CD14-positive monocyte (primary cell): ENCODE measurements at regions of chr16 and their contacts with region 1.

Region 1: DNA sequence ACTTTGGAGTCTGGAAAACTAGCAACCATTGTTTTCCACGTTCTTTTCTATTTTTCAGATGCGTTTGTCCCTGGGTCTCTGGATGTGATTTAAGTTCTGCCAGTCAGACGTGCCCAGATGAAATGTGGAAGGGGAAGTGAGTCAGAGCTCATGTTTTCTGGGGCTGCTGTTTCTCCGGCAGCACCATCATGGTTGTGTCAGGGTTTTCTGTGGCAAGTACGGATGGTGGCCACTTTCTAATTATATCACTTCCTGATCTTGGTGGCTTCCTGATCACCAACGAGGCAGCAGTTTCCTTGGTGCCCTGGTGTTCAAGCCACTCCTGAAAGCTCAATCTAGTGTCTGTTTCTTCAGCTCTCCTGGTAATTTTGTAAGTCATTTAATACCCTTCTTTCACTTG is 31.4 kb upstream of the PMFBP1 start:
- DNase-seq: peak; percentile 96 to 98 (median 97)
- H3K4me3 ChIP-seq: peak overlapping the region in 2 of 3 experiments; percentile 13 to 52
- H3K4me3 Mint-ChIP-seq: peak overlapping the region; percentile 47 to 83
- H3K27ac ChIP-seq: peak overlapping the region; percentile 97 to 100
- H3K27ac Mint-ChIP-seq: peak overlapping the region; percentile 99 to 100 (median 100)
- H3K4me1 ChIP-seq: peaks cover 37 to 44% of the 10 kb centered on the region in 2 donors
- H3K4me1 Mint-ChIP-seq: peaks cover 50% of the 10 kb centered on the region
- H3K27me3 ChIP-seq: no peaks in the 10 kb centered on the region
- H3K27me3 Mint-ChIP-seq: no peaks in the 10 kb centered on the region
- CTCF ChIP-seq: no peak

Region 2: GRCh38 chr16:72172105-72173034 is 31.0 kb before region 1 on chr16 and contains the start of gene PMFBP1:
- intact Hi-C with region 1: loop called in 1 of 2 experiments (anchors 1 kb)
- DNase-seq: peak; percentile 98 to 100 (median 100)
- H3K4me3 ChIP-seq: no peak within 1 kb of the TSS
- H3K4me3 Mint-ChIP-seq: peak within 1 kb of the TSS in 1 of 2 donors; percentile 71
- H3K27ac ChIP-seq: peak within 1 kb of the TSS; percentile 69 to 97
- H3K27ac Mint-ChIP-seq: peak within 1 kb of the TSS; percentile 93 to 99 (median 97)
- H3K4me1 ChIP-seq: peaks cover 25 to 26% of the 10 kb centered on the region in 2 donors
- H3K4me1 Mint-ChIP-seq: peaks cover 21% of the 10 kb centered on the region
- H3K27me3 ChIP-seq: no peaks in the 10 kb centered on the region
- H3K27me3 Mint-ChIP-seq: peaks cover 0 to 4% (median 0%) of the 10 kb centered on the region in 3 donors
- CTCF ChIP-seq: no peak
- polyA plus RNA-seq, gene PMFBP1: 0.15 to 0.87 (median 0.18) TPM

Region 3: DNA sequence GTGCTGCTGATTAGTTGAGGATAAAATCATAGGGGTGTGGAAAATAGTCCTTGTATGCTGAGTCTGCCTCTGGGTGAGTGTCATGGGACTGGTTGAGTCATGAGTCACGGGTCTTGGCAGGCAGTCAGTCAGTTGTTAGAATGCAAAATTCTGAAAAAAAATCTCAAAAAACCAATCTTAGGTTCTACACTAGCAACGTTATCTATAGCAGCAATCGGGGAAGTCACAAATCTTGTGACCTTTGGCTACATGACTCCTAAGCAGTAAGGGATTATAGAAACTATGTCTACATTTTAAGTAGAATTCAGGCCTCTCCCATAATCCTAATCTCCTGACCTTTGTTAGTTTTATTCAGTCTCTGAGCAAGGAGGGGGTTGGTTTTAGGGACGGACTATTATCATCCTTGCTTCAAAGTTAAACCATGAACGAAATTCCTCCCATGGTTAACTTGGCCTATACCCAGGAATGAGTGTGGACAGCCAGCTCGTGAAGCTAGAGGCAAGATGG is 13.5 kb before region 1 on chr16:
- intact Hi-C with region 1: no loop called
- DNase-seq: peak; percentile 65 to 87 (median 79)
- H3K4me3 ChIP-seq: no peak overlapping the region
- H3K4me3 Mint-ChIP-seq: no peak overlapping the region
- H3K27ac ChIP-seq: peak overlapping the region in 1 of 2 donors; percentile 16
- H3K27ac Mint-ChIP-seq: peak overlapping the region; percentile 51 to 84 (median 78)
- H3K4me1 ChIP-seq: no peaks in the 10 kb centered on the region
- H3K4me1 Mint-ChIP-seq: peaks cover 16% of the 10 kb centered on the region
- H3K27me3 ChIP-seq: no peaks in the 10 kb centered on the region
- H3K27me3 Mint-ChIP-seq: peaks cover 0 to 1% (median 1%) of the 10 kb centered on the region in 3 donors
- CTCF ChIP-seq: no peak

Region 4: GRCh38 chr16:72241930-72242329 is 38.5 kb after region 1 on chr16:
- intact Hi-C with region 1: no loop called
- DNase-seq: peak; percentile 3 to 13 (median 9)
- H3K4me3 ChIP-seq: no peak overlapping the region
- H3K4me3 Mint-ChIP-seq: no peak overlapping the region
- H3K27ac ChIP-seq: no peak overlapping the region
- H3K27ac Mint-ChIP-seq: no peak overlapping the region
- H3K4me1 ChIP-seq: no peaks in the 10 kb centered on the region
- H3K4me1 Mint-ChIP-seq: no peaks in the 10 kb centered on the region
- H3K27me3 ChIP-seq: no peaks in the 10 kb centered on the region
- H3K27me3 Mint-ChIP-seq: no peaks in the 10 kb centered on the region
- CTCF ChIP-seq: peak; percentile 61

Region 5: DNA sequence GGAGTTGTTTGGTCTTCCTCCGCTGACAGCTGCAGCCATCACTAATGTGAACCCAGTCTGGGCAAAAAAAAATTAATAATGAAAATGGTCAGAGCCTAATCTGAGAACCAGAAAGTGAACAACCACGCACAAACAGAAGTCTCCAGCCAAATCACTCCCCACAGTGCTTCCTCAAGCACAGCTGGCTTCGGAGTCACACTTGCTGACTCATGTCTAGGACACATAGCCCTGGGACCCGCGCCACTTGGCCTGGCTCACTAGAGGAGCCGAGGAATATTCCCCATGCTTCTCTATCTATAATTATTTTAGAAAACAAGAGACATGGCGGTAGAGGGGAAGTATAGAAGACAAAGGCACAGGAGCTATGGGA is 735.4 kb after region 1 on chr16:
- intact Hi-C with region 1: loop called in 1 of 2 experiments (anchors 10 kb)
- DNase-seq: peak; percentile 67 to 83 (median 82)
- H3K4me3 ChIP-seq: no peak overlapping the region
- H3K4me3 Mint-ChIP-seq: peak overlapping the region in 1 of 2 donors; percentile 62
- H3K27ac ChIP-seq: peak overlapping the region; percentile 39 to 51
- H3K27ac Mint-ChIP-seq: peak overlapping the region; percentile 63 to 95 (median 80)
- H3K4me1 ChIP-seq: peaks cover 24 to 28% of the 10 kb centered on the region in 2 donors
- H3K4me1 Mint-ChIP-seq: peaks cover 33% of the 10 kb centered on the region
- H3K27me3 ChIP-seq: no peaks in the 10 kb centered on the region
- H3K27me3 Mint-ChIP-seq: peaks cover 0 to 2% (median 0%) of the 10 kb centered on the region in 3 donors
- CTCF ChIP-seq: no peak